Activated naive CD4-positive, alpha-beta T cell treated with anti-CD3 and anti-CD28 coated beads for 36 hours (primary cell): ENCODE measurements at regions of chr10 and their contacts with region 1.

Region 1: GRCh38 chr10:17607603-17608332 is 9.4 kb downstream of the HACD1 start:
- DNase-seq: peak; percentile 23
- H3K4me3 Mint-ChIP-seq: no peak overlapping the region
- H3K27ac Mint-ChIP-seq: no peak overlapping the region
- H3K4me1 Mint-ChIP-seq: no peaks in the 10 kb centered on the region
- H3K27me3 Mint-ChIP-seq: no peaks in the 10 kb centered on the region

Region 2: DNA sequence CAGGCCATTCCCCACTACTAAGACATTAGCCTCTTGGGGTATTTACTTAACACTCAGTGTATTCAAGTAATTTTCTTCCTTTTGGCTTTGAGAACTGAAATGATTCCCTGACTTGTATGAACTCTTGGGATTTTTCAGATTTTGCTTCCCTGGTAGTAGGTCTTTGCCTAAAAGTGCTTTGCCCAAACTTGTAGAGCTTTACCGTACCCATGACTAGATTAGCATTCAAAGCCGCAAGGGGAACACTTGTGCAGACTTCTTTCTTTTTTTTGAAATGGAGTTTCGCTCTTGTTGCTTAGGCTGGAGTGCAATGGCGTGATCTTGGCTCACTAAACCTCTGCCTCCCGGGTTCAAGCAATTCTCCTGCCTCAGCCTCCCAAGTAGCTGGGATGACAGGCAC is 30.1 kb after region 1 on chr10:
- CTCF ChIA-PET with region 1: no interaction called
- intact Hi-C with region 1: no loop called
- DNase-seq: no peak
- H3K4me3 Mint-ChIP-seq: no peak overlapping the region
- H3K27ac Mint-ChIP-seq: no peak overlapping the region
- H3K4me1 Mint-ChIP-seq: peaks cover 8% of the 10 kb centered on the region
- H3K27me3 Mint-ChIP-seq: no peaks in the 10 kb centered on the region

Region 3: GRCh38 chr10:17742918-17743317 is 135.2 kb after region 1 on chr10:
- CTCF ChIA-PET with region 1: interaction called, 8 read pairs
- intact Hi-C with region 1: loop called (anchors 1 kb)
- DNase-seq: peak; percentile 83
- H3K4me3 Mint-ChIP-seq: no peak overlapping the region
- H3K27ac Mint-ChIP-seq: no peak overlapping the region
- H3K4me1 Mint-ChIP-seq: peaks cover 8% of the 10 kb centered on the region
- H3K27me3 Mint-ChIP-seq: no peaks in the 10 kb centered on the region

Region 4: DNA sequence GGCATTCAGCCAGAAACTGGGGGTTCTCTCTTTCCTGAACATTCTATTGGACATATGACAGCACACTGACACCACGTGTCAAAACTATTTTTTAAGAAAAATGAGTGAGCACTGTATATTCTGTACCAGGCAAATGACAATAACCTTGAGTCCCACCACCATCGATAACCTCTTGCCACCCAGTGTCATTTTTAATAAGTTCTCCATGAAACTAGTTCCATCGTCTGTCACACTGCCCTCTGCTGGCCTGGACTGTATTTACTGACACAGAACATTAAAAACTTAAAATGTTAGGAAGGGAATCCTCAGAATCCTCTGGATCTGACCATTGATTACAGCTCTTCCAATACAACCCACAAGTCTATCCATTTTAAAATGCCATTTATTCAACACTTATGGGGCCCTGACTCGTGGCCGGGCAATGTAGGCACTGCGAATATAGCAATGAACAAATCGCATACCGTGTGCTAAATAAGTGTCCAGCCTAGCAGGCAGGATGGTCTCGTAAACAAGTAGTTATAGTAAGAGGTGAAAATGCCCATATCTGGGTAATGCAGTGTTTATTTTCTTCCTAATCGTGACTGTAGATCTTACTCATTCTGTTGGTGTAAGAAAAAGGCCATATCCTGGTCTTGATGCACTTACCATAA is 496.6 kb after region 1 on chr10:
- CTCF ChIA-PET with region 1: interaction called, 4 read pairs
- intact Hi-C with region 1: loop called (anchors 1 kb)
- DNase-seq: peak; percentile 63
- H3K4me3 Mint-ChIP-seq: no peak overlapping the region
- H3K27ac Mint-ChIP-seq: no peak overlapping the region
- H3K4me1 Mint-ChIP-seq: no peaks in the 10 kb centered on the region
- H3K27me3 Mint-ChIP-seq: peaks cover 5% of the 10 kb centered on the region

Region 5: GRCh38 chr10:18238870-18239485 is 631.2 kb after region 1 on chr10:
- CTCF ChIA-PET with region 1: interaction called, 3 read pairs
- intact Hi-C with region 1: loop called (anchors 1 kb)
- DNase-seq: peak; percentile 10
- H3K4me3 Mint-ChIP-seq: no peak overlapping the region
- H3K27ac Mint-ChIP-seq: no peak overlapping the region
- H3K4me1 Mint-ChIP-seq: no peaks in the 10 kb centered on the region
- H3K27me3 Mint-ChIP-seq: peaks cover 5% of the 10 kb centered on the region